Activated T-helper 2 cell treated with anti-CD3 and anti-CD28 coated beads, Interferon-gamma antibody, Interleukin-2, Interleukin-4, amounts not matched to agents 10 μg/mL and 5 μg/mL and 100 μg/mL, durations not matched to agents 14 hours and 24 hours and 36 hours (primary cell): ENCODE measurements at regions of chr3 and their contacts with region 1.

Region 1: DNA sequence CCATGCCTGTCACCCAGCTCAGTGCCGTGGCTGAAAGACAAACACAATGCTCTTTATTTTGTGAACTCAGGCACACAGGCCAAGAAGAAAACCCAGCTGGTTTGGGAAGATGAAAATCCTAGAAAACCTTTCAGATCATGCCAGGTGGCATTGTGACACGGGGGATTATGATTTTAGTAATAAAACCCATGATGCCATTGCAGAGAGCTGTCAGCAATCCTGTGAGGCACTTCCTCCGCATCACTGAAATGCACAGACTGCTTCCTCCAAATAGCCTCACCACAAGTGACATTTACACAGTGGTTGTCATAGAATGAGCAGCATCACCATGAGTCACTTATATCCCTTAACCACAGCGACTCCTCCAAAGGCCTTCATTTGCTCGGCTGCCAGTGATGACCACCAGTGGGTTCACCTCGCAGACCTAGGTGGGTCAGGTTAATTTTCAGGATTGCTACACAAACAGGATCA is 22.7 kb downstream of the ABHD6 start:
- DNase-seq: no peak
- H3K4me3 Mint-ChIP-seq: no peak overlapping the region
- H3K27ac Mint-ChIP-seq: peak overlapping the region; percentile 85
- H3K4me1 Mint-ChIP-seq: peaks cover 43% of the 10 kb centered on the region
- H3K27me3 Mint-ChIP-seq: no peaks in the 10 kb centered on the region

Region 2: GRCh38 chr3:58177747-58178527 is 82.4 kb before region 1 on chr3:
- intact Hi-C with region 1: no loop called
- DNase-seq: peak; percentile 80
- H3K4me3 Mint-ChIP-seq: peak overlapping the region; percentile 74
- H3K27ac Mint-ChIP-seq: no peak overlapping the region
- H3K4me1 Mint-ChIP-seq: peaks cover 18% of the 10 kb centered on the region
- H3K27me3 Mint-ChIP-seq: peaks cover 2% of the 10 kb centered on the region

Region 3: GRCh38 chr3:58271901-58272501 is 11.7 kb after region 1 on chr3:
- intact Hi-C with region 1: loop called (anchors 1 kb)
- DNase-seq: no peak
- H3K4me3 Mint-ChIP-seq: no peak overlapping the region
- H3K27ac Mint-ChIP-seq: peak overlapping the region; percentile 82
- H3K4me1 Mint-ChIP-seq: peaks cover 26% of the 10 kb centered on the region
- H3K27me3 Mint-ChIP-seq: no peaks in the 10 kb centered on the region

Region 4: GRCh38 chr3:58349792-58350626 is 89.7 kb after region 1 on chr3:
- intact Hi-C with region 1: loop called (anchors 10 kb)
- DNase-seq: no peak
- H3K4me3 Mint-ChIP-seq: peak overlapping the region; percentile 27
- H3K27ac Mint-ChIP-seq: peak overlapping the region; percentile 82
- H3K4me1 Mint-ChIP-seq: peaks cover 67% of the 10 kb centered on the region
- H3K27me3 Mint-ChIP-seq: no peaks in the 10 kb centered on the region